A673 (cell line): ENCODE measurements at regions of chr15 and their contacts with region 1.

Region 1: GRCh38 chr15:34241372-34242330 is 16.8 kb downstream of the EMC4 start:
- DNase-seq: peak; percentile 31
- H3K4me3 ChIP-seq: no peak overlapping the region
- H3K27ac ChIP-seq: no peak overlapping the region
- H3K4me1 ChIP-seq: no peaks in the 10 kb centered on the region
- H3K27me3 ChIP-seq: no peaks in the 10 kb centered on the region
- CTCF ChIP-seq: peak; percentile 77

Region 2: GRCh38 chr15:34085746-34086145 is 155.9 kb before region 1 on chr15:
- CTCF ChIA-PET with region 1: no interaction called
- POLR2A ChIA-PET with region 1: interaction called, 23 read pairs
- intact Hi-C with region 1: no loop called
- DNase-seq: no peak
- H3K4me3 ChIP-seq: no peak overlapping the region
- H3K27ac ChIP-seq: no peak overlapping the region
- H3K4me1 ChIP-seq: no peaks in the 10 kb centered on the region
- H3K27me3 ChIP-seq: no peaks in the 10 kb centered on the region
- CTCF ChIP-seq: no peak

Region 3: DNA sequence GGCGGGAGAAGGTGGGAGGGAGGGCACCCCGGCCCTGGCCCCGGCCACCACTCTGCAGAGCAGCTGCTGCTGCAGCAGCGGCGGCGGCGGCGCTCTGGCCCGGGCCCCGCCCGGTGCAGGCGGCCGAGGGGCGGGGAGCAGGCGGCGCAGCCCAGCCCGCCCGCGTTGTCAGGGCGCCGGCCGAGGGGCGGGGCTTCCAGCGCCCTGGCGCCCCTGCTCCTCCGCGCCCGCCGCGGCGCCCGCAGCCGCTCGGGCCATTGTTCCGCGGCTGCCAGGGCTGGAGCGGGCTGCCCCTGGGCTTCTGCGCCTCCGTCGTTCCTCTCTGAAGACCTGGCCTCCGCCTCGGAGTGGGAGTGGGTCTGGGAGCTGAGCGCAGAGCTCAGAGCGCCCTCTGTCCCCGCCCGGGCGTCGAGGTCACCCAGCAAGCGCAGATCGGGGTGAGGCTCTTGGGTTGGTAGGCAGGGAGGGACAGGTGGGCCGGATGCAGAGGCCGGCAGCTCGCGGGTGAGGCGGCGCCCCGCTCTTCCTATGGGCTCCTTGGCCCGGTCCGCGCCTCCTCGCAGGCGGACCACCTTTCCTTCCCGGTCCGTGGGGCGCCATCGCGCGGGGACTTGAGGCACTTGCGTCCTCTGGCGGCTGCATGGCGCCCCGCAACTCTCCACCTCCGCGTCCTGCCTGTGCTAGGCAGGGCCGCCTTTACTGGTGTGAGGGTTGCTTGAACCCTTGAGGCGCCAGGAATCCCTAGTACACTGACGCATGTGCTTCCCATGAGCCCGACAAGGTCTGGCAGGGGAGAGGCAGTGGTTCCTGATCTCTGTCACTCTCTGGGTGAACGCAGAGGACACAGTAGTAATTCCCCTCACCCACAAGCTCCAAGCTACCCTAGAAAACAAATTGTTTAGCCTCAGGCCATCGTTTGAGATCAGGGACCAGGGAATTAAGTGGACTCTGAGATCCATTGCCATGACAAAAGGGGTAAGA is 125.7 kb after region 1 on chr15 and contains the start of gene LPCAT4:
- CTCF ChIA-PET with region 1: interaction called, 4 read pairs
- POLR2A ChIA-PET with region 1: no interaction called
- intact Hi-C with region 1: loop called (anchors 10 kb)
- DNase-seq: peak; percentile 92
- H3K4me3 ChIP-seq: peak within 1 kb of the TSS; percentile 82
- H3K27ac ChIP-seq: peak within 1 kb of the TSS; percentile 96
- H3K4me1 ChIP-seq: peaks cover 8% of the 10 kb centered on the region
- H3K27me3 ChIP-seq: no peaks in the 10 kb centered on the region
- CTCF ChIP-seq: peak; percentile 98
- total RNA-seq, gene LPCAT4: 37.8 and 53.1 TPM in 2 replicates